Posterior vena cava (tissue), 2 donors: ENCODE measurements at regions of chr9 and their contacts with region 1.

Region 1: DNA sequence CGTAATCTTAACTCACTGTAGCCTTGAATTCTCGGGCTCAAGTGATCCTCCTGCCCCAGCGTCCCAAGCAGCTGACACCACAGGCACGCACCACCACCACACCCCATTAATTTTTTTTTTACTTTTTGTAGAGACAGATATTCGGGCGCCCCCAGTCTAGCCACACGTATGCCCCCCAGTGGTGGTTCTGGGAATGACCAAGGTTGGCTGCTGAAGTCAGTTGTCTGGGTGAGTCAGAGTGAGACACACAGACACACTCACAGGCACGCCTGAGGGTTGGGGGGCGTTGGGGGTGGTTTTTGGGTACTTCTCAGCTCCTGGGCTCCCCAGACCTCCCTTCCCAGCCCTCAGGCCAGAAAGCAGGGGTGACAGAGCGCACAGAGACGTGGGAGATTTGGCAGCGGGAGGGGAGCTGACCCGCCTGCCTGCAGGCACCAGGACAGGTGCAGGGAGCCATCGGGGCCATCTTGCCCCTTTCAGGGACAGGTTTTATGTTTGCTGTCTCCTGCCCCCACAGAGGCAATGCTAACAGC is 4.2 kb upstream of the ENTPD8 start:
- DNase-seq: peak; percentile 93

Region 2: GRCh38 chr9:137034863-137035761 is 410.2 kb before region 1 on chr9:
- intact Hi-C with region 1: no loop called
- DNase-seq: peak; percentile 93

Region 3: DNA sequence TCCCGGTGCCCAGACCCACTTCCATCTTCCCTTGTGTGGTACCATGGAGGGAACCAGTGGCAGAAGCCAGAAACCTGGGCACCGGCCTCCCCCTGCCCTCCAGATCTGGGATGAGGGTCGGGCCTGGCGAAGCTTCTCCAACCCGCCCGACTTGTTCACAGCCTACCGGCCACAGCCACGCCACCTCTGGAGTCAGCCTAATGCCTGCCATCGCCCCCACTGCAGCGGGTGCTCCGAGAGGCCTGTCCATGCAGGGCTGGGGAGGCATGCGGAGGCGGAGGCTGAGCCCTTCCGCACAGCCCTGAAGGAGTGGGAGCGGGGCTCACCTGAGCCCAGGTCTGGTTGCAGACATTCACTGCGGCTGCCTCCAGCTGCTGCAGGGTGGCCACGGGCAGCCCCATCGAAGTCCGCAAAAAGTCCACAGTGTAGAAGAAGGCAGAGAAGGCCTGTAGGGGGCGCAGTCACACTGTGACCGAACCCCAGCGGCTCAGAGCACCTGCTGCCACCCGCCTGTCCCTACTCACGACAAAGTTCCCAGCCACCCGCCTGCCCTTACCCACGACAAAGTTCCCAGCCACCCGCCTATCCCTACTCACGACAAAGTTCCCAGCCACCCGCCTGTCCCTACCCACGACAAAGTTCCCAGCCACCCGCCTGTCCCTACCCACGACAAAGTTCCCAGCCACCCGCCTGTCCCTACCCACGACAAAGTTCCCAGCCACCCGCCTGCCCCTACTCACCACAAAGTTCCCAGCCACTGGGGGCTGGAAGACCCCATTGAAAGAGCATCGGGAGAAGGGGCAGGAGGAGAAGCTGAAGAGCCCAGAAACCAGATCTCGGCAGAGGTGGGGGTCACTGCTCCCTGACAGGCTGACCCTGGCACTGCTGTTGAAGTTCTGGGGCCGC is 395.5 kb before region 1 on chr9:
- intact Hi-C with region 1: loop called in 1 of 2 experiments (anchors 5 kb)
- DNase-seq: no peak

Region 4: GRCh38 chr9:137255448-137256114 is 189.8 kb before region 1 on chr9:
- intact Hi-C with region 1: no loop called
- DNase-seq: no peak

Region 5: GRCh38 chr9:137465720-137466388 is 20.5 kb after region 1 on chr9:
- intact Hi-C with region 1: loop called in 1 of 2 experiments (anchors 1 kb)
- DNase-seq: peak; percentile 66

Region 6: DNA sequence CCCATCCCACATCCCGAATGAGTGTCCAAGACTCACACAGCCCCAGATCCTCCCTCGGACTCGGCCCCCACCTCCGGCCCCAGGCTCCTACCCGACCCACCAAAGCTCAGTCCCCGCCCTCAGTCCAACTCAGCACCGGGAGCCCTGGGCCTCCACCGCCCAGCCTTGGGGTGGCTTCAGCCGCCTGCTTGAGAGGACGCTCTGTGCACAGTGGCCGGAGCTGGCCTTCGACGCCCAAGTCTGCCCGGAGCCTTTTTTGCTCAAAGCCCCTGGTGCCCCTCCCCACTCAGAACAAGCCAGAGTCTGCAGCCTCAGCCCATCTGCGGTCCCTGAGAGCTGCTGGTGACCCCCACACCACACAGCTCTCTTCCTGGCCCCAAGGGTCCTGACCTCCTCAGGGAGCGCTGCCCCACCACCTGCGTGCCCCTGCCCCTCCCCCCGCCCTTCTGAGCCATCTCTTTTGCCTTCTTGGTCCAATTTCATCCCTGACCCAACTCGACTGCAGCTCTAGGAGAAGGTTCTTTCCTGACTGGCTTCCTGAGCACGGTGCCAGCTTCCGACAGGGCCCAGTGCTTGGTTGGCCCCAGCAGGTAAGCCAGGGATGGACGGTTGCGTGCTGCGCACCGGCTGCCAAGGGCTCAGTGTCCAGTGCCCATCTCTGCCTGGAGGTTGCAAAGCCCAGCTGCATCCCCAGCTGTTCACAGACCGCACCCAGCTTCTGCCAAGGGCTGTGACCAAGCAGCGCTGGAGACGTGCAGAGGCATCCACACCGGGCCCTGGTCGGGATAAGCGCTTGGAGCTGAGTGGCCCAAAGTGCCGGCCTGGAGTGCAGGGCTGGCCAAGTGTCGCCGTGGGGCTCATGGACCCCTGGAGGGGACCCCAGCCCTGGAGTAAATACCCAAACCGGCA is 41.5 kb after region 1 on chr9:
- intact Hi-C with region 1: loop called in 1 of 2 experiments (anchors 1 kb)
- DNase-seq: peak; percentile 68